Gastrocnemius medialis (tissue), 4 donors: ENCODE measurements at regions of chr10 and their contacts with region 1.

Region 1: DNA sequence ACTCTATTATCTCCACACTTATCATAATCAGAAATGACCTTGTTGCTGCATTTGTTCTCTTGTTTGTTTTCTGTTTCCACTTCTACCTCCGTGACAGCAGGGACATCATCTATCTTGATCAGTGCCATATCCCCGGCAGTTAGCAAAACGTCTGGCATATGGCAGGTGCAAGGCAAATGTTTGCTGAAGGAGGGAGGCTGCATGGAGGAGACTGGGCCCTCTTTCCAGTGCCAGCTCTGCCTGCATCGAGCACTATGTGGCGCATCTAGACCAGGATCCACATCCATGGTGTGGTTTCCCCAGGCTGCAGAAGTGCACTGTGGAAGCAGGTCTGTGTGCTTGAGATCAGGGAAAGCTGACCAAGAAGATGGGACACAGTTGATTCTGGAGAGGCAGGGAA is 181.2 kb downstream of the KCNMA1 start:
- DNase-seq: no peak
- ATAC-seq: no peak
- H3K4me3 ChIP-seq: no peak overlapping the region
- H3K27ac ChIP-seq: no peak overlapping the region
- H3K4me1 ChIP-seq: peaks cover 4 to 5% of the 10 kb centered on the region in 2 donors
- H3K27me3 ChIP-seq: no peaks in the 10 kb centered on the region
- CTCF ChIP-seq: no peak
- POLR2A ChIP-seq: no peak

Region 2: GRCh38 chr10:77428691-77429395 is 27.6 kb before region 1 on chr10:
- in situ Hi-C with region 1: no loop called
- intact Hi-C with region 1: no loop called
- DNase-seq: peak; percentile 64 to 79
- ATAC-seq: peak; percentile 86 to 98
- H3K4me3 ChIP-seq: no peak overlapping the region
- H3K27ac ChIP-seq: no peak overlapping the region
- H3K4me1 ChIP-seq: peaks cover 7 to 16% of the 10 kb centered on the region in 2 donors
- H3K27me3 ChIP-seq: no peaks in the 10 kb centered on the region
- CTCF ChIP-seq: peak; percentile 57 to 76 (median 70)
- POLR2A ChIP-seq: no peak

Region 3: GRCh38 chr10:77478247-77478961 is 22.0 kb after region 1 on chr10:
- in situ Hi-C with region 1: no loop called
- intact Hi-C with region 1: loop called (anchors 2 kb)
- DNase-seq: no peak
- ATAC-seq: peak in 1 of 2 donors; percentile 27
- H3K4me3 ChIP-seq: no peak overlapping the region
- H3K27ac ChIP-seq: peak overlapping the region in 2 of 4 donors; percentile 1 to 68
- H3K4me1 ChIP-seq: peaks cover 29 to 30% of the 10 kb centered on the region in 2 donors
- H3K27me3 ChIP-seq: no peaks in the 10 kb centered on the region
- CTCF ChIP-seq: no peak
- POLR2A ChIP-seq: no peak